HepG2 (cell line): ENCODE measurements at regions of chr10 and their contacts with region 1.

Region 1: DNA sequence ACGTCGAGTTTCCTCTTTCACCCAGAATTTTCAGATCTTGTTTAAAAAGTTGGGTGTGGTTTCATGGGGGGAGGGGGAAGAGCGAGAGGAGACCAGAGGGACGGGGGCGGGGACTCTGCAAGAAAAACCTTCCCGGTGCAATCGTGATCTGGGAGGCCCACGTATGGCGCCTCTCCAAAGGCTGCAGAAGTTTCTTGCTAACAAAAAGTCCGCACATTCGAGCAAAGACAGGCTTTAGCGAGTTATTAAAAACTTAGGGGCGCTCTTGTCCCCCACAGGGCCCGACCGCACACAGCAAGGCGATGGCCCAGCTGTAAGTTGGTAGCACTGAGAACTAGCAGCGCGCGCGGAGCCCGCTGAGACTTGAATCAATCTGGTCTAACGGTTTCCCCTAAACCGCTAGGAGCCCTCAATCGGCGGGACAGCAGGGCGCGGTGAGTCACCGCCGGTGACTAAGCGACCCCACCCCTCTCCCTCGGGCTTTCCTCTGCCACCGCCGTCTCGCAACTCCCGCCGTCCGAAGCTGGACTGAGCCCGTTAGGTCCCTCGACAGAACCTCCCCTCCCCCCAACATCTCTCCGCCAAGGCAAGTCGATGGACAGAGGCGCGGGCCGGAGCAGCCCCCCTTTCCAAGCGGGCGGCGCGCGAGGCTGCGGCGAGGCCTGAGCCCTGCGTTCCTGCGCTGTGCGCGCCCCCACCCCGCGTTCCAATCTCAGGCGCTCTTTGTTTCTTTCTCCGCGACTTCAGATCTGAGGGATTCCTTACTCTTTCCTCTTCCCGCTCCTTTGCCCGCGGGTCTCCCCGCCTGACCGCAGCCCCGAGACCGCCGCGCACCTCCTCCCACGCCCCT is at the start of gene VIM:
- DNase-seq: no peak
- ATAC-seq: no peak
- H3K4me3 ChIP-seq: no peak within 1 kb of the TSS
- H3K27ac ChIP-seq: no peak within 1 kb of the TSS
- H3K4me1 ChIP-seq: peaks cover 17% of the 10 kb centered on the region; the same call in 1 of the 2 replicates
- H3K27me3 ChIP-seq: no peaks in the 10 kb centered on the region
- CTCF ChIP-seq: no peak
- EP300 ChIP-seq: no peak
- POLR2A ChIP-seq: no peak
- RAD21 ChIP-seq: no peak
- total RNA-seq, gene VIM: not detected in 2 replicates

Region 2: GRCh38 chr10:15859906-15860691 is 1368.2 kb before region 1 on chr10 and contains the start of gene MINDY3:
- CTCF ChIA-PET with region 1: no interaction called
- POLR2A ChIA-PET with region 1: no interaction called
- in situ Hi-C with region 1: loop called (anchors 25 kb)
- intact Hi-C with region 1: no loop called
- DNase-seq: peak; percentile 83
- ATAC-seq: peak; percentile 99
- H3K4me3 ChIP-seq: peak within 1 kb of the TSS; percentile 83 to 90 (median 88)
- H3K27ac ChIP-seq: peak within 1 kb of the TSS; percentile 55
- H3K4me1 ChIP-seq: peaks cover 21% of the 10 kb centered on the region
- H3K27me3 ChIP-seq: no peaks in the 10 kb centered on the region; a peak in 1 of 5 replicates
- CTCF ChIP-seq: 0 out of 2 replicates have a peak, but pooled peaks have one; percentile 23
- EP300 ChIP-seq: no peak
- POLR2A ChIP-seq: peak; percentile 63 to 85
- RAD21 ChIP-seq: no peak
- total RNA-seq, gene MINDY3: 17.5 and 17.8 TPM in 2 replicates

Region 3: GRCh38 chr10:17062955-17063484 is 165.3 kb before region 1 on chr10:
- CTCF ChIA-PET with region 1: no interaction called
- POLR2A ChIA-PET with region 1: no interaction called
- in situ Hi-C with region 1: no loop called
- intact Hi-C with region 1: no loop called
- DNase-seq: peak; percentile 76
- ATAC-seq: peak; percentile 85
- H3K4me3 ChIP-seq: no peak overlapping the region
- H3K27ac ChIP-seq: no peak overlapping the region
- H3K4me1 ChIP-seq: no peaks in the 10 kb centered on the region
- H3K27me3 ChIP-seq: no peaks in the 10 kb centered on the region
- CTCF ChIP-seq: peak; percentile 6; the same call in 1 of the 2 replicates
- EP300 ChIP-seq: no peak; a peak in 1 of 4 replicates
- POLR2A ChIP-seq: no peak
- RAD21 ChIP-seq: no peak

Region 4: DNA sequence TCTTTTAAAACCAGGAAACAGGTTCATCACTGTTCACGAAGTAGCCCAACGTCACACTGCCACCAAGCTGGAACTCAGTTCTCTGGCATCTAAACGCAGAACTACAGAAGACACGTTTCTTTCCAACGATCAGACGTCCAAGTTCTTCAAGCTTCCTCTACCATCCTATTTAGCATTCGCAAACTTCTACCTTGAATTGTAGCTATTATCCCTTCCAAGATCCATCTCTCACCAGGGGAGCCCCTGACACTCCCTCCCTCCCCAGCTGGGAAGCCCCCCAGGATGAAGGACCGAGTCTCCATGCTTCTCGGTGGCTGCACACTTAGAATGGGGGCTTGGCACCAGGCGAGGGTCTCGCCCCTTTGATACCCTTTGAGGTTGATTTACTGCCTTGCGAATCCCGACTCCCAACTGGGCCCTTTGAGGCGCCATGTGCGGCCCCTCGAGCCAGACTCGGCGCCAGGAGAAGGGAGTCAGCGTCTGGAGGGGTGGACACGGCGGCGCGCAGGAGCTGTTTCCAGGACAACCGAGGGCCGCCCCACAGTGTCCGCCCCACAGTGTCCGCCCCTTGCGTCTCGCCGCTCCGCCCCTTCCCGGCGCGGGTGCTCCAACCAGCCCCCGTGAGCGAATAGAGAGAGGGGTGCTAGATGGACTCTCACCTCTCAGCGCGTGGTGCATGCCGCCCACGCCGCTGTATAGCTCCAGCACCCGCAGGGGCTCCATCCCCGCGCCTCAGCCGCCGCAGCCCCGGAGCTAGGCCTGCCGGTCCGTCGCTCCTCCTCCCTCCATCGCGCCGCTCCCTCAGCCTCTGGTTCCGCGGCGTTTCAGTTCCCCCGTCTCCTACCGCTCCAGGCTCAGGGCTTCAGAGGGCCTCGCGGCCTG is 27.2 kb before region 1 on chr10 and contains the start of gene TRDMT1:
- CTCF ChIA-PET with region 1: no interaction called
- POLR2A ChIA-PET with region 1: no interaction called
- in situ Hi-C with region 1: no loop called
- intact Hi-C with region 1: loop called (anchors 1 kb)
- DNase-seq: peak; percentile 67
- ATAC-seq: peak; percentile 99
- H3K4me3 ChIP-seq: peak within 1 kb of the TSS; percentile 78 to 81 (median 81)
- H3K27ac ChIP-seq: peak within 1 kb of the TSS; percentile 66
- H3K4me1 ChIP-seq: peaks cover 32% of the 10 kb centered on the region
- H3K27me3 ChIP-seq: no peaks in the 10 kb centered on the region; a peak in 1 of 5 replicates
- CTCF ChIP-seq: peak; percentile 15; the same call in 1 of the 2 replicates
- EP300 ChIP-seq: no peak
- POLR2A ChIP-seq: 0 out of 4 replicates have a peak, but pooled peaks have one; percentile 10 to 32
- RAD21 ChIP-seq: peak; percentile 50; the same call in 1 of the 2 replicates
- total RNA-seq, gene TRDMT1: 3.0 and 6.1 TPM in 2 replicates